ENCODE measurements at regions of chr2 and their contacts with region 1.

Region 1: GRCh38 chr2:121112587-121112986 is 172.4 kb downstream of the TFCP2L1 start:
- DNase-seq: no peak
- ATAC-seq: no peak
- H3K4me3 ChIP-seq: no peak overlapping the region
- H3K27ac ChIP-seq: no peak overlapping the region
- H3K4me1 ChIP-seq: no peaks in the 10 kb centered on the region
- H3K27me3 ChIP-seq: no peaks in the 10 kb centered on the region
- CTCF ChIP-seq: no peak

Region 2: DNA sequence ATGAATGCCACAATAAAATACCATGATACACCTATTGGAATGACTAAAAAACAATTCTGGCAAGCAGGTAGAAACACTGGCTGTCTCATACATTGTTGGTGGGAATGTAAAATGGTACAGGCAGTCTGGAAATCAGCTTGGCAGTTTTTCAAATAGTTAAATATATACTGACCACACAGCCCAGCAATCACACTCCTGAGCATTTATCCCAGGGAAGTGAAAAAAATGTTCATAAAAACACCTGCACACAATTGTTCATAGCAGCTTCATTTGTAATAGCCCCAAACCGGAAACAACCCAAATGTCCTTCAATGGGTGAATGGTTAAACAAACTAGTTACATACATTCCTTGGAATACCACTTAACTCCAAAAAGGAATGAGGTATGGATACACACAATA is 35.2 kb after region 1 on chr2:
- intact Hi-C with region 1: no loop called
- DNase-seq: no peak
- ATAC-seq: no peak
- H3K4me3 ChIP-seq: no peak overlapping the region
- H3K27ac ChIP-seq: no peak overlapping the region
- H3K4me1 ChIP-seq: no peaks in the 10 kb centered on the region
- H3K27me3 ChIP-seq: no peaks in the 10 kb centered on the region
- CTCF ChIP-seq: no peak

Region 3: DNA sequence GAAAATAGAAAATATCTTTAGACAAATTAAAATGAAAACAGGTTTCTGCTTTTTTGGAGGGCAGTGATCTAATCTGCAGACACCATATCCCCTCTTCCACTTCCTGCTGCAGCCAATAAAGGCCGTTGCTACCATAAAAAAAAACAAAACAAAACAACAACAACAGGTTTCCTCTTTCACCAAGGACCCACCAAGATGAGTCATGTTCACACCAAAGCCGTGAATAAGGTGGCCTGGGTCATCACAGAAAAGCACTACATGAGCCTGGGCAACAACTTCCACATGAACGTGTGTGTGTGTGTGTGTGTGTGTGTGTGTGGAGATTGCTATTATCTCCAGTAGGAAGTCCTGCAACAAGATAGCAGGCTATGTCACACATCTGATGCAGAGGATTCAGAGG is 197.2 kb after region 1 on chr2:
- intact Hi-C with region 1: loop called in 1 of 2 experiments (anchors 5 kb)
- DNase-seq: no peak
- ATAC-seq: no peak
- H3K4me3 ChIP-seq: no peak overlapping the region
- H3K27ac ChIP-seq: no peak overlapping the region
- H3K4me1 ChIP-seq: no peaks in the 10 kb centered on the region
- H3K27me3 ChIP-seq: peaks cover 0 to 6% (median 0%) of the 10 kb centered on the region in 3 donors
- CTCF ChIP-seq: no peak